MCF 10A (cell line): ENCODE measurements at regions of chr2 and their contacts with region 1.

Region 1: GRCh38 chr2:129396980-129397599 is 582.4 kb upstream of the RAB6C start:
- DNase-seq: peak; percentile 43
- H3K4me3 Mint-ChIP-seq: no peak overlapping the region
- H3K27ac Mint-ChIP-seq: no peak overlapping the region
- H3K4me1 Mint-ChIP-seq: no peaks in the 10 kb centered on the region
- H3K27me3 Mint-ChIP-seq: no peaks in the 10 kb centered on the region
- CTCF ChIP-seq: peak; percentile 82

Region 2: GRCh38 chr2:128178650-128179460 is 1218.2 kb before region 1 on chr2:
- CTCF ChIA-PET with region 1: no interaction called
- POLR2A ChIA-PET with region 1: no interaction called
- intact Hi-C with region 1: loop called (anchors 10 kb)
- DNase-seq: peak; percentile 68
- H3K4me3 Mint-ChIP-seq: no peak overlapping the region
- H3K27ac Mint-ChIP-seq: no peak overlapping the region
- H3K4me1 Mint-ChIP-seq: no peaks in the 10 kb centered on the region
- H3K27me3 Mint-ChIP-seq: no peaks in the 10 kb centered on the region
- CTCF ChIP-seq: peak; percentile 68

Region 3: DNA sequence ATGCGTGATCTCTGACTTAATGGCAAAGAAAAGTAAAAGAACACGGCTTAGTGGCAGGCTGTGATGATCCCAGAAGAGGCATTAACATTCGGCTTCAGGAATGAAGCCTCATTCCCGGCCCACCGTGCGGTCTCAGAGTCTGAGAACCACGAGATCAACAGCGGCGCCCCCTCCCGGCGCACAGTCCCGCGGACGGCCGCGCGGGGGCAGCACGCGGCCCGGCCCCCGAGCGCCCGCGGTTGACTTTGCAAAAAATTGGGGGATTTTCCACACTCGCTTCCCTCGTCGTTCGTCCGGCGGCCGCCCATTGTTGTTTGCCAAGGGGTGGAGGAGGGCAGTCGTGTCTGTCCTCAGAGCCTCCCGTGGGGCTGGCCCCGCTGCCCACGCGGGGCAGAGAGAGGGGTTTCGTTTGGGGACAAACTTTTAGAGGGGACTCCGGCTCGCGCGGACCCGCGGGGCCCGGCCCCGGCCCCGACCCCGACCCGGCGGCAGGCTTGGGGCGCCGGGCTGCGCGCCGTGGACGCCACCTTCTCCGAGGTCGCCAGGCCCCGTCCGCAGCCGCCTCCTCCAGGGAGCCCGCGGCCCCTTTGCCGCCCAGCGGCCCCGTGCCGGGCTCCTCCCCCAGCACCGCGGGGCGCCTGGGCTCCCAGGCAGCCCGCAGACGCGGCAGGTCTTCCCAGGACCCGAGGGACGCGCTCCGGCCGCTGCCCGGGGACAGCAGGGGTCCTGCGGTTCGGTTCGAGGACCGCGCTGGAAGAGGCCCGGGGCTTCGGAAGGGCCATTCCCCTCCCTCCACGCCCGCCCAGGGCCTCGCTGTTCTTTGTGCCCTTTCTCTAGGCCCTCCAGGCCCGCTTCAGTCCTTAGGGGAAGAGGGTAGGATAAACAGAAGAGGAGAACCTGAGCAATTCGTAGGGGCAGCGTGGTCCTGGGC is 1075.0 kb before region 1 on chr2:
- CTCF ChIA-PET with region 1: interaction called, 16 read pairs
- POLR2A ChIA-PET with region 1: no interaction called
- intact Hi-C with region 1: loop called (anchors 1 kb)
- DNase-seq: peak; percentile 79
- H3K4me3 Mint-ChIP-seq: peak overlapping the region; percentile 60
- H3K27ac Mint-ChIP-seq: no peak overlapping the region
- H3K4me1 Mint-ChIP-seq: no peaks in the 10 kb centered on the region
- H3K27me3 Mint-ChIP-seq: no peaks in the 10 kb centered on the region
- CTCF ChIP-seq: peak; percentile 92

Region 4: DNA sequence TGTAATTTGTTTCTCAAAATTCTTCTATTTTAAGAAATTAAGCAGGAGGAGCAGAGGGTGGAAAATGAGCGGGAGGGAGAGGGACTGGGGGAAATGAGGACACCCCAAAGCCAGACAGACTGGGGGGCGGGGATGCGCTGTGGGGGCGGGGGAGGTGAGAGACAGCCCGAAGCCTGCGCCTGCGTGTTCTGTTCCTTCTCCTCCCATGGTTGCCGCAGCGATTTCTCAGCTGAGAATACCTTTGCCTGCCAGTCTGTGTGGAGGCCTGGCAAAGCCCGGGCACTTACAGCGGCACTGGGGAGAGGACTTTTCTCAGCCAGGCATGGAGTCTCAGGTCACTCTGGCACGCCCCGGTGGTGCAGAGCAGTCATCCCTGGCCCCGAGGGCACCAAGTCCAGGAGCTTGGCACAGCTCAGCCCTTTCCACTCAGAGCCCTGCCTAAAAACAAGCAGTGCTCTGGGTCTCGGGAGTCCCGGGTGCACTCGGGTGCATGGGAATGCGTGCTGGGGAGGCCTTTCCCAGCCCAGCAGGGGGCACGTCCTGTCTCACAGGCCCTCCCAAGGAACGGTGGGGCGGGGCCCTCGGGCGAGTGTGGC is 789.1 kb before region 1 on chr2:
- CTCF ChIA-PET with region 1: no interaction called
- POLR2A ChIA-PET with region 1: no interaction called
- intact Hi-C with region 1: no loop called
- DNase-seq: peak; percentile 38
- H3K4me3 Mint-ChIP-seq: no peak overlapping the region
- H3K27ac Mint-ChIP-seq: no peak overlapping the region
- H3K4me1 Mint-ChIP-seq: peaks cover 6% of the 10 kb centered on the region
- H3K27me3 Mint-ChIP-seq: no peaks in the 10 kb centered on the region
- CTCF ChIP-seq: no peak

Region 5: GRCh38 chr2:128736689-128737545 is 660.2 kb before region 1 on chr2:
- CTCF ChIA-PET with region 1: interaction called, 5 read pairs
- POLR2A ChIA-PET with region 1: no interaction called
- intact Hi-C with region 1: loop called (anchors 1 kb)
- DNase-seq: peak; percentile 66
- H3K4me3 Mint-ChIP-seq: peak overlapping the region; percentile 56
- H3K27ac Mint-ChIP-seq: no peak overlapping the region
- H3K4me1 Mint-ChIP-seq: peaks cover 18% of the 10 kb centered on the region
- H3K27me3 Mint-ChIP-seq: no peaks in the 10 kb centered on the region
- CTCF ChIP-seq: peak; percentile 99

Region 6: DNA sequence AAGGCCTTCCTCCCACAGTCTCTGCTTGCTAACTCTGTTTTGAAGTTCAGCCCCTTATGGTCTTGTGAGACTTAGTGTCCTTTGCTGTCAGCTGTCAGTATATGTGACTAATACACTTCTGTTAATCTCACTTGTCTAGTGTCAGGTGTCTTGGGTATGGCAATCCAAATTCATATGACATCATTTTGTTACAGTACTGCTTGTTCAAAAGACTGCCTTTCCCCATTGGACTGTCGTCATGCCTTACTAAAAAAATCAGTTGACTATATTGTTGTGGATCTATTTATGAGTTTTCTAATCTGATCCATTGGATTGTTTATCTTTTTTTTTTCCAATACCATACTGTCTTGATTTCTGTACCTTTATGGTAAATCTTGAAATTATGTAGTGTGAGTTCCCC is 467.0 kb before region 1 on chr2:
- CTCF ChIA-PET with region 1: no interaction called
- POLR2A ChIA-PET with region 1: no interaction called
- intact Hi-C with region 1: no loop called
- DNase-seq: no peak
- H3K4me3 Mint-ChIP-seq: no peak overlapping the region
- H3K27ac Mint-ChIP-seq: no peak overlapping the region
- H3K4me1 Mint-ChIP-seq: no peaks in the 10 kb centered on the region
- H3K27me3 Mint-ChIP-seq: no peaks in the 10 kb centered on the region
- CTCF ChIP-seq: no peak

Region 7: DNA sequence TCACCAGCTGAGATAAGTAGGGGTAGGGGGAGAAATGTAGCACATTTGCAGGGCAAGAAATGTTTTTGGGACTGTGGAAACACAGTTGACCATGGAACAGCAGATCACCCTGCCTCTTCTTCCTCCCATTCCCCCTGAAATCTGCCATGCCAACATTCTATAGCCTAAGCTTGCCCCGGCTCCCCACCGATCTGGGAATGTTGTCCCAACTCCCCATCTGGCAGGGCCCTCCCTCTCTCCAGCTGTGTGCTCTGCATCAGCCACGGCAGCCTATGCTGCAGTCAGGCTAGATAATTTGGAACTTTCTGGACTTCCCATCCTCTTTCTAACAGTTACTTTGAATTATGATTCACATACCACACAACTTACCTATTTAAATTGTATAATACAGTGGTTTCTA is 157.3 kb after region 1 on chr2:
- CTCF ChIA-PET with region 1: no interaction called
- POLR2A ChIA-PET with region 1: no interaction called
- intact Hi-C with region 1: no loop called
- DNase-seq: no peak
- H3K4me3 Mint-ChIP-seq: no peak overlapping the region
- H3K27ac Mint-ChIP-seq: no peak overlapping the region
- H3K4me1 Mint-ChIP-seq: no peaks in the 10 kb centered on the region
- H3K27me3 Mint-ChIP-seq: no peaks in the 10 kb centered on the region
- CTCF ChIP-seq: no peak